ENCODE measurements at regions of chr2 and their contacts with region 1.

Region 1: GRCh38 chr2:100752628-100753333 is 67.2 kb upstream of the NPAS2 start:
- DNase-seq: peak; percentile 92
- H3K4me3 ChIP-seq: peak overlapping the region in 1 of 3 experiments; percentile 5
- H3K27ac ChIP-seq: peak overlapping the region; percentile 100
- H3K4me1 ChIP-seq: peaks cover 72% of the 10 kb centered on the region
- H3K27me3 ChIP-seq: no peaks in the 10 kb centered on the region
- CTCF ChIP-seq: no peak

Region 2: DNA sequence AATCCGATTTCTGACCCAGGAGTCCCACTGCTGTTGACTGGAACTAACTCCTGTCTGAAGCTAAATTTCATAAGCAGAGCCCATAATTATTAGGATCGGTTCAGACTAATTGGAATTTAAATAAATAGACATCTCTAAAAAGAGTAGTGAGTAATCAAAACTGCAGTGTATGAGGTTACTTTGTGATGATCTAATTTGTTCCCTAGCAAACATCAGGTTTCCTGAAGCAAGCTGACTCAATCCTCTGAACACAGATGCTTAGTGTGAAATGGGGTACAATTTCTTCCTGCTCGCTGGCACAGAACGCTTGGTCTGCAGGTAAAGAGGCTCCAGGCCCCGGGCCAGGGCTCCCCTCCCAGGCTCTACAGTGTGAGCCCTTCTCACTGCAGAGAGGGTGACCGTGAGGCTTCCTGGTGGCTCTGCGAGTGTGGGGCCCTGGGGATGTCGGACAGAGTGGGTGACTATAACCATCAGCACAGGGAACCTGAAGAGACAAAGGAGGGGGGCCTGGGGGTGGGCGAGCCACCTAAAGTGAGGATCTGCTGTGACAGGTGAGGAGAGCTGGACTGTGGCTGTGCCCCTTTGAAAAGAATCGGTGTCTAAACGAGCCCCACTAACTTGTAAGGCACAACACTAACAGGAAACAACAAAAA is 355.5 kb before region 1 on chr2:
- CTCF ChIA-PET with region 1: no interaction called
- dilution Hi-C with region 1: no loop called
- in situ Hi-C with region 1: no loop called
- intact Hi-C with region 1: no loop called
- DNase-seq: no peak
- H3K4me3 ChIP-seq: no peak overlapping the region
- H3K27ac ChIP-seq: no peak overlapping the region
- H3K4me1 ChIP-seq: no peaks in the 10 kb centered on the region
- H3K27me3 ChIP-seq: no peaks in the 10 kb centered on the region
- CTCF ChIP-seq: no peak

Region 3: DNA sequence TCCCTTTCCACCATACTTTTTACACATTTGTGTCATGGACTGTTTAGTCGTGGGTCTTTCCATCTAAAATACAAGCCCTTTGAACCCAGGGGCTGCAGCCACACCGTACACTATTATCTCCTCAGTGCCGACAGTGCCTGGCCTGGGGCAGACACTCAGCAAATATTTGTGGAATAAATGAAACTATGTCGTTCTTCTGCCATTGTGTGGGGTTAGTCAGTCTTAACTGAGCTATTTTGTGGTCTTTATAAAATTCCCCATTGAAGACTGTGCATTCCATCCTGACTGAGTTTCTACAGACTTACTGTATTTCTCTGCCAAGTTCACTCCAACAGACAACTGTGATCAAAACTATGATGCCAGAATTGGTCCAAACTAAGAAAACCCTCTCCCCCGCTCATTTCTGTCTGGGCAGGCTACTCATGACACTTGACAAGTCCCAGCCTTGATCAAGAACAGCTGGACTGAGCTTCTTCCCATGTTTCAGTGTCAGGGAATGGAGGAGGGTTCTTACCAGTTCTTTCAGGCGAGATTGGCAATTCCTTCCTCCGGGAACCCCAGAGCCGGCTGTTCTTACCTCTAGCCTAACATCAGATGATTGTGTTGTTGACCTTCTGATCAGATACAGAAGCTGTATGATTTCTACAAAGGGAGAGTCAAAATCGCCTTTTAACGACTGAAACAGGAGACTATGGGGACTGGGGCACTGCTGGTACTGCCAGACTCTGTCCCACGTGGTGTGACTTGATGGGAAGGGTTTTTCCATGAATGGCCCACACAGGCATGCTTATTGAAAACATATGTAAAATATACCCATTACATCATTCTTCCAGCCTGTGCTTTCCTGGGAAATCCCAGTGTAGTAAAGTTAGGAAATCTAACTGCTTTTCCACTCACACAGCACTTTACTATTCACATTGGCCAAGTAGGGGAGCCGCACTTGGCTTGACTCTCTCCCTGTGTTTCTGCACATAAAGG is 10.2 kb before region 1 on chr2:
- CTCF ChIA-PET with region 1: no interaction called
- dilution Hi-C with region 1: no loop called
- in situ Hi-C with region 1: no loop called
- intact Hi-C with region 1: loop called (anchors 1 kb)
- DNase-seq: peak; percentile 96
- H3K4me3 ChIP-seq: no peak overlapping the region
- H3K27ac ChIP-seq: peak overlapping the region; percentile 93
- H3K4me1 ChIP-seq: peaks cover 43% of the 10 kb centered on the region
- H3K27me3 ChIP-seq: no peaks in the 10 kb centered on the region
- CTCF ChIP-seq: no peak

Region 4: DNA sequence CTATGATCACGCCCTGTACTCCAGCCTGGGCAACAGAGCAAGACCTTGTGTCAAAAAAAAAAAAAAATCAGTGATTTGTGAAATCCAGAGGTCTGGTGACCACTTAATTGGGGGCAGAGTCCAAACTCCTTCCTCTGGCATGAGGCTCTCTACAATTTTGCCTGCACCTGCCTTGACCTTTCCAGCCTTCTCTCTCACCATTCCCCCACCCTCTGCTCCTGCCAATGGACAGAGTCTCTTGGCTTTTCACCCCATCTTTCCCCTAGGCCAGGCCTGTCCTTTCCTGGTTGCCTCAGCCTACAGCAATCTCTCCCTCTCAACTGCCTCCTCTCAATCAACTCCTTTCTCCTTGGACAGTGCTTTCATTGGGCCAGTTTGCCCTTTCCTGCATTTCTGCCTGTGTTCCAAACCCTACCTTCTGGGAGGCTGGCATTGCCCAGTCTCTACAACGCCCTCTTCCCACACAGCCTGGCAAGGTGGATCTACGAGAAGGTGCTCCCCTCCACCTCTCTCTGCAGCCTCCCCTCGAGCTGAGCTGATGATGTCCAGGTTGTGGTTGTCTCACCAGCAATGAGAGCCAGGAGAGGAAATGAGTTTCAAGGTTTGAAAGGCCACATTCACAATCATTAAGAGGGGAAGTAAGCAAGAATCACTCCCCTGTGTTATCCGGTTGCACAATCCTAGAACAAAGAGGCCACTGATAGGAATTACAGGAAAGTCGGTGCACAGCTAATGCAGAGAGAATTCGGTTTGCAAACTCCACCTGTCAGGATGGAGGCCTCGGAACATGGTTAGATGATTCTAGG is 27.6 kb after region 1 on chr2:
- CTCF ChIA-PET with region 1: interaction called, 5 read pairs
- dilution Hi-C with region 1: no loop called
- in situ Hi-C with region 1: no loop called
- intact Hi-C with region 1: loop called (anchors 1 kb)
- DNase-seq: peak; percentile 98
- H3K4me3 ChIP-seq: no peak overlapping the region
- H3K27ac ChIP-seq: peak overlapping the region; percentile 89
- H3K4me1 ChIP-seq: peaks cover 50% of the 10 kb centered on the region
- H3K27me3 ChIP-seq: no peaks in the 10 kb centered on the region
- CTCF ChIP-seq: peak in 1 of 2 donors; percentile 9

Region 5: GRCh38 chr2:100984892-100985379 is 232.2 kb after region 1 on chr2:
- CTCF ChIA-PET with region 1: no interaction called
- dilution Hi-C with region 1: no loop called
- in situ Hi-C with region 1: no loop called
- intact Hi-C with region 1: no loop called
- DNase-seq: peak; percentile 47
- H3K4me3 ChIP-seq: no peak overlapping the region
- H3K27ac ChIP-seq: no peak overlapping the region
- H3K4me1 ChIP-seq: no peaks in the 10 kb centered on the region
- H3K27me3 ChIP-seq: no peaks in the 10 kb centered on the region
- CTCF ChIP-seq: peak; percentile 83 to 88

Measured in mammary epithelial cell (primary cell).